HCT116 (cell line): ENCODE measurements at regions of chr9 and their contacts with region 1.

Region 1: DNA sequence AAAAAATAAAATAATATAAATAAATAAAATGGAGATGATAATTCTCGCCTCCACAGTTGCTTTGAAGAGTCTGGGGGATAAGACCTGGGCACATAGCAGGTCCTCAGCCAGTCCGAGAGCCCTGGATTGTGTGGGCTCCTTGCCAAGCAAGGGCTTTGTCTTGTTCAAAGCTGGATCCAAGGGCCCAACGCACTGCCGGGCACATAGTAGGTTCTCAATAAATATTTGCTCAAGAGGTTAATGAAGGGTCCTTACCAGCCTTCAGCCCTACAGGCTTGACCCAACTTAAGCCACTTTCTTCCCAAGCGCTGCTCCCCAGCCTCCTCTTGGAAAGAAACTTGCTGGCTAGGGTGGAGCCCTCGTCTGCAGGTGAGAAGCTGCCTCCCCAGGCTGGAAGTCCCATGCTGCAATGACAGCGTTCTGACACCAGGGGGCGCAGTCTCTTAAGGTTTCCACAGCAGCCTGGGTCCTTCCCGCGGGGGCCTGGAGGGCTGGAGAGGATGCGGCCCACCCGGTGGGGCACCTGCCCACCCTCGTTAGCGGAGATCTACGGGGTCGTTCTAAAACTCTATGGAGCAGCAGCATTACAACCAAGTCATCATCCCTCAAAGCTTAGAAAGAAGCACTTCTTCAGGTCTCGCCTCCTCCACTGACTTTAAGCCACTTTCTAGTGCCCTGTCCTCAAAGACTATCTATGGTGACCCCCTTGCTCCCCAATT is 115.2 kb downstream of the LHX2 start:
- DNase-seq: peak; percentile 60
- ATAC-seq: peak; percentile 80
- H3K4me3 ChIP-seq: no peak overlapping the region
- H3K27ac ChIP-seq: no peak overlapping the region
- H3K4me1 ChIP-seq: peaks cover 0 to 13% of the 10 kb centered on the region in 2 experiments; a peak in 2 of 4 replicates
- H3K27me3 ChIP-seq: no peaks in the 10 kb centered on the region
- CTCF ChIP-seq: peak; percentile 89 to 98 (median 91)
- POLR2A ChIP-seq: no peak
- RAD21 ChIP-seq: peak; percentile 96

Region 2: GRCh38 chr9:123401879-123402513 is 724.7 kb before region 1 on chr9:
- CTCF ChIA-PET with region 1: no interaction called
- POLR2A ChIA-PET with region 1: no interaction called
- RAD21 ChIA-PET with region 1: no interaction called
- intact Hi-C with region 1: loop called (anchors 5 kb)
- DNase-seq: peak; percentile 23
- ATAC-seq: peak; percentile 86
- H3K4me3 ChIP-seq: no peak overlapping the region
- H3K27ac ChIP-seq: no peak overlapping the region
- H3K4me1 ChIP-seq: no peaks in the 10 kb centered on the region
- H3K27me3 ChIP-seq: no peaks in the 10 kb centered on the region
- CTCF ChIP-seq: peak; percentile 63 to 83 (median 82); a peak in 5 of 6 replicates
- POLR2A ChIP-seq: no peak
- RAD21 ChIP-seq: peak; percentile 82

Region 3: GRCh38 chr9:123544007-123544827 is 582.5 kb before region 1 on chr9:
- CTCF ChIA-PET with region 1: no interaction called
- POLR2A ChIA-PET with region 1: no interaction called
- RAD21 ChIA-PET with region 1: no interaction called
- intact Hi-C with region 1: loop called (anchors 2 kb)
- DNase-seq: peak; percentile 12
- ATAC-seq: peak; percentile 63; the same call in 1 of the 2 replicates
- H3K4me3 ChIP-seq: no peak overlapping the region
- H3K27ac ChIP-seq: no peak overlapping the region
- H3K4me1 ChIP-seq: no peaks in the 10 kb centered on the region
- H3K27me3 ChIP-seq: no peaks in the 10 kb centered on the region
- CTCF ChIP-seq: peak; percentile 81 to 83 (median 83)
- POLR2A ChIP-seq: no peak
- RAD21 ChIP-seq: peak; percentile 94

Region 4: GRCh38 chr9:124320062-124320973 is 193.6 kb after region 1 on chr9:
- CTCF ChIA-PET with region 1: interaction called, 16 read pairs
- POLR2A ChIA-PET with region 1: no interaction called
- RAD21 ChIA-PET with region 1: interaction called in 1 of 2 experiments, 4 read pairs
- intact Hi-C with region 1: loop called (anchors 1 kb)
- DNase-seq: peak; percentile 28
- ATAC-seq: peak; percentile 97
- H3K4me3 ChIP-seq: no peak overlapping the region
- H3K27ac ChIP-seq: no peak overlapping the region
- H3K4me1 ChIP-seq: peaks cover 0 to 9% of the 10 kb centered on the region in 2 experiments; a peak in 1 of 4 replicates
- H3K27me3 ChIP-seq: no peaks in the 10 kb centered on the region
- CTCF ChIP-seq: peak; percentile 83 to 93 (median 91)
- POLR2A ChIP-seq: no peak
- RAD21 ChIP-seq: peak; percentile 75

Region 5: DNA sequence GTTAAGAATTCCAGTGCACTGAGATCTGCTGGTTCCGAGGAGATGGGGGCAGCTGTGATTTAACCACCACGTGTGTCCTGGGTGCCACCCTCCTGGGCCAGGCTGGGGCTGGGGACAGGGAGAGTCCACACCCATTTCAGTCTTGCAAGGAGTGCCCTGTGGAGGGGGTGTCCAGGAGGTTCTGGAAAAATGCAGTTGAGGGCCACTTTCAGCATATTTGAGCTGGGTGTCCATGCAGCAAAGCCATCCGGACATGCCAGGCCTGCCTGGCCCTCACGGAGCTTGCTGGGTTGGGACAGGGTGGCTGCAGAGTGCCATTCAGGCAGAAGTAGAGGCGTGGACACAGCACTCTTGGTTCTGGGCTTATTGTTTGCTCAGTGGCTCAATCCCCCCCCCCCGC is 199.1 kb after region 1 on chr9:
- CTCF ChIA-PET with region 1: interaction called, 16 read pairs
- POLR2A ChIA-PET with region 1: interaction called, 3 read pairs
- RAD21 ChIA-PET with region 1: interaction called in 1 of 2 experiments, 3 read pairs
- intact Hi-C with region 1: no loop called
- DNase-seq: no peak
- ATAC-seq: no peak
- H3K4me3 ChIP-seq: no peak overlapping the region
- H3K27ac ChIP-seq: no peak overlapping the region
- H3K4me1 ChIP-seq: no peaks in the 10 kb centered on the region
- H3K27me3 ChIP-seq: no peaks in the 10 kb centered on the region
- CTCF ChIP-seq: no peak
- POLR2A ChIP-seq: no peak
- RAD21 ChIP-seq: no peak

Region 6: GRCh38 chr9:124392871-124393460 is 266.2 kb after region 1 on chr9:
- CTCF ChIA-PET with region 1: interaction called, 13 read pairs
- POLR2A ChIA-PET with region 1: no interaction called
- RAD21 ChIA-PET with region 1: no interaction called
- intact Hi-C with region 1: loop called (anchors 2 kb)
- DNase-seq: peak; percentile 39
- ATAC-seq: peak; percentile 85
- H3K4me3 ChIP-seq: no peak overlapping the region
- H3K27ac ChIP-seq: no peak overlapping the region
- H3K4me1 ChIP-seq: peaks cover 2 to 43% of the 10 kb centered on the region in 2 experiments; a peak in 2 of 4 replicates
- H3K27me3 ChIP-seq: no peaks in the 10 kb centered on the region
- CTCF ChIP-seq: peak; percentile 20 to 62 (median 51); a peak in 4 of 6 replicates
- POLR2A ChIP-seq: no peak
- RAD21 ChIP-seq: peak; percentile 45

Region 7: DNA sequence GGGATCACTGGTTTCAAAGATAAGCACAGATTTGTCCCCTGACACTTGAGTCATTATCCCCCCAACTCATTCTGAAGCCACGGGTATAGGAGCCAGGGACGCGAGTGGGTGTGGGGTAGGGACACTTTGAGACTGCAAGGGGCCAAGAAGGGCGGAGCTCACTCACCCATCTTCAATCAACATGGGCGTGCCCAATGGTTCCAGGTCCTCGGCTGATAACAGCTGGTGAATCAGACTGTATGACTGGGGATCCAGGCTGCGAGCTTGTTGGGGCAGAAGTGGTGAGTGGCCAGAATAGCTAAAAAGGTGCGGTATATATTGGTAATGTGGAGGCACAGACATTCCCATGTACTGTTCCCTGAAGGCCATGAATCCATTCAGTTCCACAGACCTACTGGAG is 411.2 kb after region 1 on chr9:
- CTCF ChIA-PET with region 1: no interaction called
- POLR2A ChIA-PET with region 1: no interaction called
- RAD21 ChIA-PET with region 1: no interaction called
- intact Hi-C with region 1: loop called (anchors 5 kb)
- DNase-seq: no peak
- ATAC-seq: no peak
- H3K4me3 ChIP-seq: no peak overlapping the region
- H3K27ac ChIP-seq: no peak overlapping the region
- H3K4me1 ChIP-seq: no peaks in the 10 kb centered on the region
- H3K27me3 ChIP-seq: no peaks in the 10 kb centered on the region
- CTCF ChIP-seq: no peak
- POLR2A ChIP-seq: no peak
- RAD21 ChIP-seq: no peak